Right cardiac atrium (tissue), 5 donors: ENCODE measurements at regions of chr19 and their contacts with region 1.

Region 1: DNA sequence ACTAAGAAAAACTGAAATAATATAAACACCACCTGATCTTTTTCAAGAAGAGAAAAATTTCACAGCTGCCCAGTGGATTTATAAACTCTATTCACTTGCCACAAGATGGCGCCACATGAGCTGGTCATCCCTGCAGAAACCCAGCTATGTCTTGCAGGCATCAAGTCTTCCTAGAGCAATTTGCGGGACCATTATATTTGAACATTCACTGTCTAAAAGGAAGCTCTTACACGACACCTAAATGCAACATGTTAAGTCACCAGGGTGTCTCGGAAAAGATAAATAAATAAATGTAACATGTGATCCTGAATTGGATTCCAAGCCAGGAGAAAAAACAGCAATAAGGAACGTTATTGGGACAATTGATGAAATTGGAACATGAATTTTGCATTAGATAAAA is 20.3 kb upstream of the AKT2 start:
- DNase-seq: peak; percentile 77 to 85 (median 81)
- ATAC-seq: peak; percentile 68 to 77
- H3K4me3 ChIP-seq: no peak overlapping the region
- H3K27ac ChIP-seq: no peak overlapping the region
- H3K4me1 ChIP-seq: no peaks in the 10 kb centered on the region
- H3K27me3 ChIP-seq: no peaks in the 10 kb centered on the region

Region 2: GRCh38 chr19:40139533-40140287 is 165.7 kb before region 1 on chr19:
- intact Hi-C with region 1: loop called in 1 of 4 experiments (anchors 10 kb)
- DNase-seq: no peak
- ATAC-seq: peak in 1 of 2 donors; percentile 24
- H3K4me3 ChIP-seq: no peak overlapping the region
- H3K27ac ChIP-seq: no peak overlapping the region
- H3K4me1 ChIP-seq: no peaks in the 10 kb centered on the region
- H3K27me3 ChIP-seq: no peaks in the 10 kb centered on the region

Region 3: GRCh38 chr19:40523322-40524047 is 218.1 kb after region 1 on chr19:
- intact Hi-C with region 1: loop called in 2 of 4 experiments (anchors 5 to 10 kb)
- DNase-seq: peak; percentile 37 to 70 (median 67)
- ATAC-seq: peak; percentile 60 to 62
- H3K4me3 ChIP-seq: no peak overlapping the region
- H3K27ac ChIP-seq: no peak overlapping the region
- H3K4me1 ChIP-seq: no peaks in the 10 kb centered on the region
- H3K27me3 ChIP-seq: no peaks in the 10 kb centered on the region

Region 4: GRCh38 chr19:40589591-40590429 is 284.4 kb after region 1 on chr19:
- intact Hi-C with region 1: loop called in 2 of 4 experiments (anchors 2 to 10 kb)
- DNase-seq: peak in 1 of 3 donors; percentile 41
- ATAC-seq: peak in 1 of 2 donors; percentile 28
- H3K4me3 ChIP-seq: no peak overlapping the region
- H3K27ac ChIP-seq: no peak overlapping the region
- H3K4me1 ChIP-seq: no peaks in the 10 kb centered on the region
- H3K27me3 ChIP-seq: no peaks in the 10 kb centered on the region

Region 5: GRCh38 chr19:40598121-40598917 is 292.9 kb after region 1 on chr19:
- intact Hi-C with region 1: loop called in 1 of 4 experiments (anchors 10 kb)
- DNase-seq: peak; percentile 86 to 96 (median 96)
- ATAC-seq: peak; percentile 61 to 62
- H3K4me3 ChIP-seq: no peak overlapping the region
- H3K27ac ChIP-seq: no peak overlapping the region
- H3K4me1 ChIP-seq: peaks cover 4% of the 10 kb centered on the region
- H3K27me3 ChIP-seq: no peaks in the 10 kb centered on the region

Region 6: GRCh38 chr19:40633207-40633606 is 327.8 kb after region 1 on chr19:
- intact Hi-C with region 1: loop called in 1 of 4 experiments (anchors 10 kb)
- DNase-seq: no peak
- ATAC-seq: no peak
- H3K4me3 ChIP-seq: no peak overlapping the region
- H3K27ac ChIP-seq: no peak overlapping the region
- H3K4me1 ChIP-seq: no peaks in the 10 kb centered on the region
- H3K27me3 ChIP-seq: no peaks in the 10 kb centered on the region